ENCODE measurements at regions of chr5 and their contacts with region 1.

Region 1: GRCh38 chr5:10377081-10377480 is 23.6 kb downstream of the MARCHF6 start:
- DNase-seq: no peak
- H3K4me3 ChIP-seq: no peak overlapping the region
- H3K27ac ChIP-seq: no peak overlapping the region
- H3K4me1 ChIP-seq: no peaks in the 10 kb centered on the region
- CTCF ChIP-seq: no peak

Region 2: DNA sequence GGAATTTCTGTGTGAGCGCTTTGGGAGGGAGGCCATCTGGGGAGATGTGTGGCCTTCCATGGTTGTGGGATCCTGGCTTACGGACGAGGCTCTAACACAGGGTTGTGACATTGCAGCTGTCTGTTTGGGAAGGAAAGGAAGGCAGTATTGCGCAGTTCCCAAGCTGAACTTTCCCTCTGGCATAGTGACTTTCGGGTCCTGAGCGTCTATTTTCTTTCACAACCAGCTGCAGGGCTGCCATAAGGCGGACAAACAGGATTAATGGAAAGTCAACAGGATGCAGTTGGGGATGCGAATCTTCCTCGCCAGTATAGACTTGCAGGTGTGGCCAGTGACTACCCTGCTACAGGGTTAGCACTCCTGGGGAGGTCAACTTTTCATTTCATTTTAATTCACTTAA is 101.1 kb before region 1 on chr5:
- CTCF ChIA-PET with region 1: no interaction called
- POLR2A ChIA-PET with region 1: no interaction called
- intact Hi-C with region 1: no loop called
- DNase-seq: no peak
- H3K4me3 ChIP-seq: no peak overlapping the region
- H3K27ac ChIP-seq: no peak overlapping the region
- H3K4me1 ChIP-seq: no peaks in the 10 kb centered on the region
- CTCF ChIP-seq: no peak

Region 3: GRCh38 chr5:10387690-10388089 is 10.6 kb after region 1 on chr5:
- CTCF ChIA-PET with region 1: interaction called, 4 read pairs
- POLR2A ChIA-PET with region 1: interaction called, 10 read pairs
- intact Hi-C with region 1: no loop called
- DNase-seq: no peak
- H3K4me3 ChIP-seq: no peak overlapping the region
- H3K27ac ChIP-seq: no peak overlapping the region
- H3K4me1 ChIP-seq: no peaks in the 10 kb centered on the region
- CTCF ChIP-seq: no peak

Measured in OCI-LY7 (cell line).